ENCODE measurements at regions of chr9 and their contacts with region 1.

Region 1: DNA sequence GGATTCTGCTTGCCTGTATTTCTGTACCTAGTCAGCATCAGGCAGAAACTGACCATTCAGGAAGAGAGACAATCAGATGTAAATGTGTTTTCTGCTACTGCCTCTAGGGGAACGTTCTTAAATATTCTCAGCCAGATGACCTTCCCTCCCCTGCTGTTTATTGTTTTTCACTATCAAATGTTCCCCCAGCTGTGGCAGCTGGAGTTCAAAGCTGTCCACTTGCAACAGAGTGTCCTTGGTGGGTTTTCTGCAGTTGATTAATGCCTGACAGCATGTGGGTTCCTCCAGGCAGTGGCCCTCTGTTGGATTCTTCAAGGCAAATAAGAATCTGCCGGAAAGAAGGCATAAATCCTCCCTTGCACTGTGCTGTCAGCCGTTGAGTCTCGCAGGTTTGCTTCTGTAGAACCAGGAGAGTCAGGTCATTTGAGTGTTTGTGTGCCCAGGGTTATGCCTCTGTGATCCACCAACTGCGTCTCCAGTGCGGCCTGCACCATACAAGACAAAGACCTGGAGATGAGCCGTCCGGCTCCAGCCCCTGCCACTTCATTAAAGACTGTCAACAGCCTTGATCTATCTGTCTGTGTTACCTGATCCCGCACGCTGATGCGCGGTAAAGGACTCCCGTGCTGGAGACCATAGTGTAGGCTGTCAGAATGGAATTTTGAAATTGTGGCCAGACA is 203.4 kb downstream of the GADD45G start:
- DNase-seq: peak; percentile 49
- H3K4me3 ChIP-seq: no peak overlapping the region
- H3K27ac ChIP-seq: peak overlapping the region; percentile 64
- H3K4me1 ChIP-seq: peaks cover 41% of the 10 kb centered on the region
- H3K27me3 ChIP-seq: no peaks in the 10 kb centered on the region
- CTCF ChIP-seq: peak; percentile 11 to 19
- POLR2A ChIP-seq: no peak

Region 2: DNA sequence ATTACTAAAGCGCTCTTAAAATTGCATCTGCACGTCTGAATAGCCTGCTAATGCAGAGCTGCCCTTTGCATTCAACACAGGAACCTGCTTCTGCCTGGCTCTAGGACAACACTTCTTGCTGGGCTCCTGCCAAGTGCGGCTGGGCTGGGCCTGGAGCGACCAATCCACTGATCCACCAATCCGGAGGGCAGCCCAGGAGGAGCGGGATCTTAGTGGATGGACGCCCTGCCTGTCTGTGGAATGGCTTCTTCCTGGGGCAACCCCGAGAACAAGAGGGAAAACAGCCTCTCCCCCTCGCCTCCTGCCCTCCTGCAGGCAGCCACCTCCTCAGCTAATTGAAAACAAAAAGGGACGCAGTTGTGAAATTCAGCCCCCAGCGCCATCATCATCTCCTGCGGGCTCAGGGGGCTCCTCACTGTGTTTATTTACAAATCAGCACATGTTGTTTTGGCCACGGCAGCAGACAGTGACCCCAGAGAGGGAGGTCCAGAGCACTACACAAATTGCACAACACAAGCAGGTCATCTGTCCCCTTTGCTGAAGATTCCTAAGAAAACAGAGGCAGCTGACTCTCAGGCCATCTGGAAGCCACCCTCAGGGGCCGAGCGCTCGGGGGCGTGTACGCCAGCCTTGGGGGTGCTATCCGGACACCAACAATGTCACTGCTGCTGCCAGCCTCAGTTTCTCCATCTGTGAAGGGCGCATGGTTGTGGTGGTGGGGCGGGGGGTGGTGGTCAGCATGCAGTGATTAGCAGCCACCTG is 146.1 kb before region 1 on chr9:
- CTCF ChIA-PET with region 1: no interaction called
- POLR2A ChIA-PET with region 1: no interaction called
- dilution Hi-C with region 1: no loop called
- intact Hi-C with region 1: loop called (anchors 5 kb)
- DNase-seq: peak; percentile 98
- H3K4me3 ChIP-seq: peak overlapping the region in 2 of 3 experiments; percentile 18 to 39
- H3K27ac ChIP-seq: no peak overlapping the region
- H3K4me1 ChIP-seq: peaks cover 9% of the 10 kb centered on the region
- H3K27me3 ChIP-seq: no peaks in the 10 kb centered on the region
- CTCF ChIP-seq: no peak
- POLR2A ChIP-seq: no peak

Region 3: GRCh38 chr9:89732295-89732938 is 75.8 kb before region 1 on chr9:
- CTCF ChIA-PET with region 1: no interaction called
- POLR2A ChIA-PET with region 1: no interaction called
- dilution Hi-C with region 1: no loop called
- intact Hi-C with region 1: loop called (anchors 2 kb)
- DNase-seq: peak; percentile 10
- H3K4me3 ChIP-seq: no peak overlapping the region
- H3K27ac ChIP-seq: no peak overlapping the region
- H3K4me1 ChIP-seq: peaks cover 11% of the 10 kb centered on the region
- H3K27me3 ChIP-seq: no peaks in the 10 kb centered on the region
- CTCF ChIP-seq: no peak
- POLR2A ChIP-seq: no peak

Measured in endothelial cell of umbilical vein (primary cell).